HepG2 (cell line): ENCODE measurements at regions of chr7 and their contacts with region 1.

Region 1: DNA sequence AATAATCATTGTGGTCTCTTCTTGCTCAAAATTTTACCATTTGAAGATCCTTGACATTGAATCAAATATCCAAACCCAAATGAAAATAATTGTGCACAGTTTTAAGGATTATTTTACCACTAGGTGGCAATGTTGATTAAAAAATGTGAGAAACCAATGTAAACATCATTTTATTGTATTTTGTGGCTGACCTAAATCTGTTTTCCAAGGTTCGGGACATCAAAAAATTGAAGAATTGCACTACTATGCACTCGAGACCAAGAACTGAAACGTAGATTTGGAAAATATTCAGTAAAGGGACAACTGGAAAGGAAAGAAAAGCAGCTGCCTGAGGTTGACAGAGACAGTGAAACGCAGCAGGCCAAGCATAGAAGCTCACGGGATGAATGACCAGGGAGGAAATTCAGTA is 259.3 kb downstream of the SNX13 start:
- DNase-seq: peak; percentile 11
- ATAC-seq: peak; percentile 27; the same call in 1 of the 3 replicates
- H3K4me3 ChIP-seq: no peak overlapping the region
- H3K27ac ChIP-seq: no peak overlapping the region
- H3K4me1 ChIP-seq: no peaks in the 10 kb centered on the region
- H3K27me3 ChIP-seq: no peaks in the 10 kb centered on the region
- CTCF ChIP-seq: peak; percentile 56
- EP300 ChIP-seq: no peak
- POLR2A ChIP-seq: no peak
- RAD21 ChIP-seq: no peak

Region 2: GRCh38 chr7:17580141-17580540 is 100.8 kb before region 1 on chr7:
- CTCF ChIA-PET with region 1: no interaction called
- POLR2A ChIA-PET with region 1: no interaction called
- in situ Hi-C with region 1: no loop called
- intact Hi-C with region 1: no loop called
- DNase-seq: no peak
- ATAC-seq: no peak
- H3K4me3 ChIP-seq: no peak overlapping the region
- H3K27ac ChIP-seq: no peak overlapping the region
- H3K4me1 ChIP-seq: no peaks in the 10 kb centered on the region
- H3K27me3 ChIP-seq: no peaks in the 10 kb centered on the region
- CTCF ChIP-seq: no peak
- EP300 ChIP-seq: no peak
- POLR2A ChIP-seq: no peak
- RAD21 ChIP-seq: no peak

Region 3: GRCh38 chr7:17593819-17594419 is 87.0 kb before region 1 on chr7:
- CTCF ChIA-PET with region 1: no interaction called
- POLR2A ChIA-PET with region 1: no interaction called
- in situ Hi-C with region 1: no loop called
- intact Hi-C with region 1: no loop called
- DNase-seq: no peak
- ATAC-seq: no peak
- H3K4me3 ChIP-seq: no peak overlapping the region
- H3K27ac ChIP-seq: no peak overlapping the region
- H3K4me1 ChIP-seq: no peaks in the 10 kb centered on the region
- H3K27me3 ChIP-seq: no peaks in the 10 kb centered on the region
- CTCF ChIP-seq: no peak
- EP300 ChIP-seq: no peak
- POLR2A ChIP-seq: no peak
- RAD21 ChIP-seq: no peak

Region 4: GRCh38 chr7:17663061-17663675 is 17.8 kb before region 1 on chr7:
- CTCF ChIA-PET with region 1: no interaction called
- POLR2A ChIA-PET with region 1: no interaction called
- in situ Hi-C with region 1: no loop called
- intact Hi-C with region 1: no loop called
- DNase-seq: no peak
- ATAC-seq: no peak
- H3K4me3 ChIP-seq: no peak overlapping the region
- H3K27ac ChIP-seq: no peak overlapping the region
- H3K4me1 ChIP-seq: no peaks in the 10 kb centered on the region
- H3K27me3 ChIP-seq: no peaks in the 10 kb centered on the region; a peak in 1 of 5 replicates
- CTCF ChIP-seq: no peak
- EP300 ChIP-seq: no peak
- POLR2A ChIP-seq: no peak
- RAD21 ChIP-seq: no peak

Region 5: GRCh38 chr7:18320971-18321567 is 640.1 kb after region 1 on chr7:
- CTCF ChIA-PET with region 1: no interaction called
- POLR2A ChIA-PET with region 1: no interaction called
- in situ Hi-C with region 1: loop called (anchors 10 kb)
- intact Hi-C with region 1: no loop called
- DNase-seq: peak; percentile 23
- ATAC-seq: peak; percentile 68
- H3K4me3 ChIP-seq: no peak overlapping the region
- H3K27ac ChIP-seq: no peak overlapping the region
- H3K4me1 ChIP-seq: no peaks in the 10 kb centered on the region
- H3K27me3 ChIP-seq: no peaks in the 10 kb centered on the region
- CTCF ChIP-seq: peak; percentile 50
- EP300 ChIP-seq: no peak
- POLR2A ChIP-seq: no peak
- RAD21 ChIP-seq: no peak

Region 6: DNA sequence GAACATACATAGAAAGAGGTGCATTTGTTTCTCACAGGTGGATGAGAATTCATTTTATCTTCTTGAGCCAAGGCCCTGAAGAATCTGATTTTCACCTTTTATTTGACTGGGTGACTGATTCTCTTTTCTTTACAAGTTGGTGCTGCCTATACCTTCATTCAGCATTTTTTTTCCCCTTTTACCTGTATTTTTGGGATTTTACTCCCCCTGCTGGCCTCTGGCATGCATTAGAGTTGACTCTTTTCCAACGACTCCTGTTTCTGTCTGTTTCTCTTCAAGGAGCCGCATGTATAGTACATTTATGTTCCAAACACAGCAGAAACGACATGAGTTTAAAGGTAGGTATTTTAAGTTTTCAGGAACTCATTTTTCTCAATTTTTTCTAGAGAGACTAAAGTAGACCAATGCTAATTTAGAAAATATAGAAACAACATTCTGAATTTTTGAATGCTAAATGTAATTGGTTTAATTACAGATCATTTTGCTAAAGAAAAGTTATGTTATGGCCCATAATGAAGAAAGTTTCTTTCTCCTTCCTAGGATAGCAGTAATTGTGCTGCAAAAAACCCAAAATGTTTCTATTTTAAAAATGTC is 664.8 kb after region 1 on chr7:
- CTCF ChIA-PET with region 1: interaction called, 7 read pairs
- POLR2A ChIA-PET with region 1: no interaction called
- in situ Hi-C with region 1: no loop called
- intact Hi-C with region 1: loop called (anchors 2 kb)
- DNase-seq: peak; percentile 35
- ATAC-seq: peak; percentile 73
- H3K4me3 ChIP-seq: no peak overlapping the region
- H3K27ac ChIP-seq: no peak overlapping the region
- H3K4me1 ChIP-seq: no peaks in the 10 kb centered on the region
- H3K27me3 ChIP-seq: no peaks in the 10 kb centered on the region
- CTCF ChIP-seq: peak; percentile 70
- EP300 ChIP-seq: no peak
- POLR2A ChIP-seq: no peak
- RAD21 ChIP-seq: peak; percentile 22; the same call in 1 of the 2 replicates

Region 7: GRCh38 chr7:18570890-18571478 is 890.0 kb after region 1 on chr7:
- CTCF ChIA-PET with region 1: no interaction called
- POLR2A ChIA-PET with region 1: no interaction called
- in situ Hi-C with region 1: no loop called
- intact Hi-C with region 1: loop called (anchors 2 kb)
- DNase-seq: peak; percentile 13
- ATAC-seq: no peak
- H3K4me3 ChIP-seq: no peak overlapping the region
- H3K27ac ChIP-seq: no peak overlapping the region
- H3K4me1 ChIP-seq: no peaks in the 10 kb centered on the region
- H3K27me3 ChIP-seq: no peaks in the 10 kb centered on the region; a peak in 2 of 5 replicates
- CTCF ChIP-seq: no peak; the same call in 1 of the 2 replicates
- EP300 ChIP-seq: no peak
- POLR2A ChIP-seq: no peak
- RAD21 ChIP-seq: no peak

Region 8: DNA sequence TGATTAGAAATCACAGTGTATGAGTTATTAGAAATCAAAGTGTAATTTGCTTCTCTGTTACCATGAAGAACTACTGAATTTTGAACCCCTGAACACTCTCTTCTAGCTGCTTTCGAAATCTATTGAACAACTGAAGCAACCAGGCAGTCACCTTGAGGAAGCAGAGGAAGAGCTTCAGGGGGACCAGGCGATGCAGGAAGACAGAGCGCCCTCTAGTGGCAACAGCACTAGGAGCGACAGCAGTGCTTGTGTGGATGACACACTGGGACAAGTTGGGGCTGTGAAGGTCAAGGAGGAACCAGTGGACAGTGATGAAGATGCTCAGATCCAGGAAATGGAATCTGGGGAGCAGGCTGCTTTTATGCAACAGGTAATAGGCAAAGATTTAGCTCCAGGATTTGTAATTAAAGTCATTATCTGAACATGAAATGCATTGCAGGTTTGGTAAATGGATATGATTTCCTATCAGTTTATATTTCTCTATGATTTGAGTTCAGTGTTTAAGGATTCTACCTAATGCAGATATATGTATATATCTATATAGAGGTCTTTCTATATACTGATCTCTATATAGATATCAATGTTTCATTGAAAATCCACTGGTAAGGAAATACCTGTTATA is 985.3 kb after region 1 on chr7:
- CTCF ChIA-PET with region 1: no interaction called
- POLR2A ChIA-PET with region 1: no interaction called
- in situ Hi-C with region 1: no loop called
- intact Hi-C with region 1: loop called (anchors 5 kb)
- DNase-seq: peak; percentile 28
- ATAC-seq: peak; percentile 84
- H3K4me3 ChIP-seq: no peak overlapping the region
- H3K27ac ChIP-seq: no peak overlapping the region
- H3K4me1 ChIP-seq: no peaks in the 10 kb centered on the region
- H3K27me3 ChIP-seq: no peaks in the 10 kb centered on the region
- CTCF ChIP-seq: peak; percentile 76
- EP300 ChIP-seq: no peak
- POLR2A ChIP-seq: no peak
- RAD21 ChIP-seq: no peak